ENCODE measurements at regions of chr2 and their contacts with region 1.

Region 1: DNA sequence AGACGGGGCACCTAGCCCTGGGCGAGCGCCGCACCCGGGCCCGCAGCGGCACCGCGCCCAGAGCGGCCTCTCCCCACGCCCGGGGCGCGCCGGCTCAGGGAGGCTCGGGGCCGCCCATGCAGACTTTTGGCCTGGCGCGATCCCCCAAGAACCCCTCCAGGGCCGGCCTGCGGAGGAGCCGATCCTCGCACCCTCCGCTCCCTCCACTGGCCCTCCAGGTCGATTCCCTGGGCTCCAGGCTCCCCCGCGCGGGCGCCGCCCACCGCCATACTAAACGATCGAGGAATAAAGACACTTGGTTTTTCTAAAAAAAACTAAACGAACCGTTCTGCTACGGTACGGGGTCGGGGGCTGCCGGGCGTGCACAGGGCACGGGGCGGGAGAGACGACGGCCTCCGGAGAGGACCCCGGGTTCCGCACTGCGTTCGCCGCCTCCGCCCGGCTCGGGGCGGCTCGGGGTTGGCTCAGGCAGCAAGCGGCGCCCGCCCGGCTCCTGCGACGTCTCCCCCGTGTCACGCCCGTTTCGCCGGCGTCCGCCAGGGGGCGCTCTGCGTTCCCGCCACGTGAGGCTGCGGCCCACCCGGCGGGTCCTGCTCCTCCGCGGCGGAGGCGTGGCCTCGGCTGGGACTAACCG is 365 bp upstream of the KHK start:
- DNase-seq: peak; percentile 94 to 100 (median 98)
- ATAC-seq: peak; percentile 89
- H3K4me3 ChIP-seq: peak overlapping the region; percentile 68 to 80
- H3K4me3 Mint-ChIP-seq: peak overlapping the region; percentile 83
- H3K27ac ChIP-seq: peak overlapping the region; percentile 78 to 82
- H3K27ac Mint-ChIP-seq: peak overlapping the region; percentile 80
- H3K4me1 ChIP-seq: peaks cover 28% of the 10 kb centered on the region
- H3K4me1 Mint-ChIP-seq: peaks cover 21% of the 10 kb centered on the region
- H3K27me3 ChIP-seq: no peaks in the 10 kb centered on the region
- H3K27me3 Mint-ChIP-seq: no peaks in the 10 kb centered on the region
- CTCF ChIP-seq: peak; percentile 81

Region 2: GRCh38 chr2:26785431-26786206 is 300.6 kb before region 1 on chr2 and contains the start of gene CENPA:
- CTCF ChIA-PET with region 1: no interaction called
- POLR2A ChIA-PET with region 1: no interaction called
- intact Hi-C with region 1: loop called in 1 of 2 experiments (anchors 10 kb)
- DNase-seq: peak; percentile 92 to 99 (median 94)
- ATAC-seq: peak; percentile 99
- H3K4me3 ChIP-seq: peak within 1 kb of the TSS; percentile 52 to 63
- H3K4me3 Mint-ChIP-seq: peak within 1 kb of the TSS; percentile 84
- H3K27ac ChIP-seq: peak within 1 kb of the TSS; percentile 58 to 61
- H3K27ac Mint-ChIP-seq: peak within 1 kb of the TSS; percentile 88
- H3K4me1 ChIP-seq: peaks cover 16% of the 10 kb centered on the region
- H3K4me1 Mint-ChIP-seq: peaks cover 12% of the 10 kb centered on the region
- H3K27me3 ChIP-seq: no peaks in the 10 kb centered on the region
- H3K27me3 Mint-ChIP-seq: peaks cover 11% of the 10 kb centered on the region
- CTCF ChIP-seq: no peak
- total RNA-seq, gene CENPA: 0.39 to 0.62 TPM

Region 3: GRCh38 chr2:26816893-26817292 is 269.3 kb before region 1 on chr2:
- CTCF ChIA-PET with region 1: no interaction called
- POLR2A ChIA-PET with region 1: no interaction called
- intact Hi-C with region 1: no loop called
- DNase-seq: no peak
- ATAC-seq: no peak
- H3K4me3 ChIP-seq: no peak overlapping the region
- H3K4me3 Mint-ChIP-seq: no peak overlapping the region
- H3K27ac ChIP-seq: no peak overlapping the region
- H3K27ac Mint-ChIP-seq: no peak overlapping the region
- H3K4me1 ChIP-seq: peaks cover 4% of the 10 kb centered on the region
- H3K4me1 Mint-ChIP-seq: peaks cover 8% of the 10 kb centered on the region
- H3K27me3 ChIP-seq: no peaks in the 10 kb centered on the region
- H3K27me3 Mint-ChIP-seq: peaks cover 13% of the 10 kb centered on the region
- CTCF ChIP-seq: no peak

Region 4: GRCh38 chr2:26922405-26923188 is 163.6 kb before region 1 on chr2:
- CTCF ChIA-PET with region 1: no interaction called
- POLR2A ChIA-PET with region 1: no interaction called
- intact Hi-C with region 1: no loop called
- DNase-seq: peak in 8 of 9 experiments; percentile 13 to 61 (median 38)
- ATAC-seq: peak; percentile 67
- H3K4me3 ChIP-seq: no peak overlapping the region
- H3K4me3 Mint-ChIP-seq: no peak overlapping the region
- H3K27ac ChIP-seq: no peak overlapping the region
- H3K27ac Mint-ChIP-seq: no peak overlapping the region
- H3K4me1 ChIP-seq: no peaks in the 10 kb centered on the region
- H3K4me1 Mint-ChIP-seq: peaks cover 6% of the 10 kb centered on the region
- H3K27me3 ChIP-seq: no peaks in the 10 kb centered on the region
- H3K27me3 Mint-ChIP-seq: peaks cover 28% of the 10 kb centered on the region
- CTCF ChIP-seq: peak; percentile 68

Region 5: DNA sequence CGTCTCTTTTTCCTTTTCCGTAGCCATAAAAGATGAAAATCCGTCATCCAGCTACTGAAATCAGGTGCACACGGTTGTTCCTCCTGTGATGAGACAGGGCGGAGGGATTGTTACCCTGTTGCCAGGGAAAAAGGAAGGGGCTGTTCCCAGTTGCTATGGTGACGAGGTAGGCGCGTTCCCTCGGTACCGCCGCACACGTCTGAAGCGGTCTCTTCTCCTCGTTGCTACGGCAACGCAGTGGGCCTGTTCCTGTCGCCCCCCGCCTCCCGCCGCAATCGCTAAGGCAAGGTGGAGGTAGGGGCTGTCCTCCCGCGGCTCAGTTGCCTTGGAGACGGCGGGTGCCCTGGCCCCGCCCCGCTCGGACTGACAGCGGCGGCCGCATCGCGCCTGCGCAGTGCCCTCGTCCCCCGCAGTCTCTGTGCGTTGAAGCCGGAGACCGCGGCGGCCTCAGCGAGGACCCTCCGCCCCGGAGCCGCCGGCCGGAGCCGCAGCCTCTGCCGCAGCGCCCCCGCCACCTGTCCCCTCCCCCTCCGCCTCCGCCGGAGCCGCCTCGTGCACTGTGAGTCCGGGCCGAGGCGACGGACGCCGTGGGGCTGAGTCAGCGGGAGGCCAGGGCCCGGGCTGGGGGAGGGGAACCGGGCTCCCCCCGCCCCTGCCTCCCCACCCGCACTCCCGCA is 115.8 kb before region 1 on chr2 and contains the start of gene MAPRE3:
- CTCF ChIA-PET with region 1: no interaction called
- POLR2A ChIA-PET with region 1: no interaction called
- intact Hi-C with region 1: loop called in 1 of 2 experiments (anchors 1 kb)
- DNase-seq: peak; percentile 60 to 95 (median 84)
- ATAC-seq: peak; percentile 85
- H3K4me3 ChIP-seq: peak within 1 kb of the TSS; percentile 58 to 65
- H3K4me3 Mint-ChIP-seq: peak within 1 kb of the TSS; percentile 83
- H3K27ac ChIP-seq: peak within 1 kb of the TSS in 1 of 2 experiments; percentile 49
- H3K27ac Mint-ChIP-seq: peak within 1 kb of the TSS; percentile 37
- H3K4me1 ChIP-seq: peaks cover 9% of the 10 kb centered on the region
- H3K4me1 Mint-ChIP-seq: peaks cover 25% of the 10 kb centered on the region
- H3K27me3 ChIP-seq: no peaks in the 10 kb centered on the region
- H3K27me3 Mint-ChIP-seq: peaks cover 19% of the 10 kb centered on the region
- CTCF ChIP-seq: no peak
- total RNA-seq, gene MAPRE3: 2.6 to 3.8 TPM

Region 6: DNA sequence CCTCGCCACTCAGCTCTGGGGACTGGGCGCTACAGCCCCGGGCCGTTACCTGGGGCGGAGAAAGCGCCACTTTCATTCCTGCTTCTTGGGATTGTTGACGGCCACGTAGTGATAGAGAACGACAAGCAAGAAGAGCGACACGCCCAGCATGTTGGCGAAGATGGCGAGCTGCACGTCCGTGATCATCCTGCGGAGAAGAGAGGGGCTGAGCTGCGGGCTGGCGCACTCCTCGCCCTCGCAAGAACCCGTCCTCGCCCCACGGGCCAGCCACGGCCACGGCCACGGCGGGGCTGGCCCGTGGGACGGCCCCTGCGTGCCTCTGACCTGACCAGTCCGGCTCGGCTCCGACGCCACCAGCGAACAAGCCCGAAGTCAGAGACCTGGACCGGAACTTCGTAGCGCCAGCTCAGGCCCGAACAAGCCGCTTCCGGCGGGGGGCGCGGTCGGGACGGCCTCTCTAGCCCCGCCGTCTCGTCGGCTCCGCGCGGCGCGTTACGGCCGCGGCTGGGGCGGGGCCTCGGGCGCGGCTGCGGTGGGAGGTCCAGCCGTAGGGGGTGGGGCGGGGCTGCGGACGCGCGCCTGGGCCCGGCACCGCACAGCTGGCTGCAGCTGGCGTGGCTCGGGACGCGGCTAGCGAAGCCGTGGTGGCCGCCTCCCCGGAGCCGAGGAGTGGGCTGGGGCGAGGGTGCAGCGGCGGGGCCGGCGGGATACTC is 14.8 kb before region 1 on chr2 and contains the start of gene OST4:
- CTCF ChIA-PET with region 1: interaction called, 7 read pairs
- POLR2A ChIA-PET with region 1: interaction called, 35 read pairs
- intact Hi-C with region 1: loop called (anchors 1 kb)
- DNase-seq: peak; percentile 74 to 94 (median 88)
- ATAC-seq: peak; percentile 88
- H3K4me3 ChIP-seq: peak within 1 kb of the TSS; percentile 84 to 93
- H3K4me3 Mint-ChIP-seq: peak within 1 kb of the TSS; percentile 98
- H3K27ac ChIP-seq: peak within 1 kb of the TSS; percentile 92 to 98
- H3K27ac Mint-ChIP-seq: peak within 1 kb of the TSS; percentile 98
- H3K4me1 ChIP-seq: peaks cover 46% of the 10 kb centered on the region
- H3K4me1 Mint-ChIP-seq: peaks cover 76% of the 10 kb centered on the region
- H3K27me3 ChIP-seq: no peaks in the 10 kb centered on the region
- H3K27me3 Mint-ChIP-seq: no peaks in the 10 kb centered on the region
- CTCF ChIP-seq: no peak
- total RNA-seq, gene OST4: 252 to 260 TPM

Region 7: DNA sequence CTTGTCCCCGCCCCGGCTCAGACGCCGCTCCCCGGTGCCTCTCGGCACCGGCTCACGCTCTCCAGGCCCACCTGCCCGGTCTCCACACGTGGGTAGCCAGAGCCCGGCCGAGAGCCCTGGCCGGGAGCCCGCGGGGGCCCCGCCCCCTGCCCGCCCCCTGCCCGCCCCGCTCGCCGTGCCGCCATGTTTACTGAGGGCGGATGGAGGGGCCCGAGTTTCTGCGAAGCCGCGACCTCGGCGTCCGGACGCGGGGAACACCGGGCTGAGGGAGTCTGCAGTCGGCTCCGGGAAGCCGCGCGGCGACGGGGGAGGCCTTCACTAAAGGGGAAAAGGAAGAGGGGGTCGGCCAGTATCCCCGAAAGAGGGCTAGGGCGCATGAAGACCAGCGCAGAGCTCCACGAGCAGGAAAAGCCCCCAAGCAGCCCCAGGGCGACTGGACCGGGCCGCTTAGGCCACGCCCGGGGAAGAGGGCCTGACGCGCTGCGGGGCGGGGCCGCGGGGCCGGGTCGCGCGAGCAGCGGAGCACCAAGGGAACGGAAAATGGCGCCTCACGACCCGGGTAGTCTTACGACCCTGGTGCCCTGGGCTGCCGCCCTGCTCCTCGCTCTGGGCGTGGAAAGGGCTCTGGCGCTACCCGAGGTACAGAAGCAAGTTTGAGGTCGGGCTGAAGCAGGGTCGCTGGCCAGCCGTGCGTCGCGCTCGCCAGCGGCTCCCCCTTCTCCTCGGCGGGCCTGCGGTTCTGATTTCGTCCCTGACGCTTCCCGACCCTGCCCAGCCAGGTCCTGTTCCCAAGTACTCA is 125.8 kb after region 1 on chr2 and contains the starts of genes ATRAID and SLC5A6:
- CTCF ChIA-PET with region 1: no interaction called
- POLR2A ChIA-PET with region 1: no interaction called
- intact Hi-C with region 1: loop called (anchors 1 kb)
- DNase-seq: peak; percentile 78 to 94 (median 87)
- ATAC-seq: peak; percentile 84
- H3K4me3 ChIP-seq: peak within 1 kb of the TSS; percentile 67 to 99
- H3K4me3 Mint-ChIP-seq: peak within 1 kb of the TSS; percentile 100
- H3K27ac ChIP-seq: peak within 1 kb of the TSS; percentile 97 to 100
- H3K27ac Mint-ChIP-seq: peak within 1 kb of the TSS; percentile 100
- H3K4me1 ChIP-seq: peaks cover 26% of the 10 kb centered on the region
- H3K4me1 Mint-ChIP-seq: peaks cover 44% of the 10 kb centered on the region
- H3K27me3 ChIP-seq: no peaks in the 10 kb centered on the region
- H3K27me3 Mint-ChIP-seq: no peaks in the 10 kb centered on the region
- CTCF ChIP-seq: no peak
- total RNA-seq, gene ATRAID: 70.0 to 71.7 TPM
- total RNA-seq, gene SLC5A6: 410 to 431 TPM

Region 8: GRCh38 chr2:27249159-27249890 is 163.1 kb after region 1 on chr2:
- CTCF ChIA-PET with region 1: no interaction called
- POLR2A ChIA-PET with region 1: no interaction called
- intact Hi-C with region 1: no loop called
- DNase-seq: no peak
- ATAC-seq: no peak
- H3K4me3 ChIP-seq: no peak overlapping the region
- H3K4me3 Mint-ChIP-seq: no peak overlapping the region
- H3K27ac ChIP-seq: no peak overlapping the region
- H3K27ac Mint-ChIP-seq: no peak overlapping the region
- H3K4me1 ChIP-seq: peaks cover 4% of the 10 kb centered on the region
- H3K4me1 Mint-ChIP-seq: peaks cover 2% of the 10 kb centered on the region
- H3K27me3 ChIP-seq: no peaks in the 10 kb centered on the region
- H3K27me3 Mint-ChIP-seq: peaks cover 7% of the 10 kb centered on the region
- CTCF ChIP-seq: no peak

Region 9: DNA sequence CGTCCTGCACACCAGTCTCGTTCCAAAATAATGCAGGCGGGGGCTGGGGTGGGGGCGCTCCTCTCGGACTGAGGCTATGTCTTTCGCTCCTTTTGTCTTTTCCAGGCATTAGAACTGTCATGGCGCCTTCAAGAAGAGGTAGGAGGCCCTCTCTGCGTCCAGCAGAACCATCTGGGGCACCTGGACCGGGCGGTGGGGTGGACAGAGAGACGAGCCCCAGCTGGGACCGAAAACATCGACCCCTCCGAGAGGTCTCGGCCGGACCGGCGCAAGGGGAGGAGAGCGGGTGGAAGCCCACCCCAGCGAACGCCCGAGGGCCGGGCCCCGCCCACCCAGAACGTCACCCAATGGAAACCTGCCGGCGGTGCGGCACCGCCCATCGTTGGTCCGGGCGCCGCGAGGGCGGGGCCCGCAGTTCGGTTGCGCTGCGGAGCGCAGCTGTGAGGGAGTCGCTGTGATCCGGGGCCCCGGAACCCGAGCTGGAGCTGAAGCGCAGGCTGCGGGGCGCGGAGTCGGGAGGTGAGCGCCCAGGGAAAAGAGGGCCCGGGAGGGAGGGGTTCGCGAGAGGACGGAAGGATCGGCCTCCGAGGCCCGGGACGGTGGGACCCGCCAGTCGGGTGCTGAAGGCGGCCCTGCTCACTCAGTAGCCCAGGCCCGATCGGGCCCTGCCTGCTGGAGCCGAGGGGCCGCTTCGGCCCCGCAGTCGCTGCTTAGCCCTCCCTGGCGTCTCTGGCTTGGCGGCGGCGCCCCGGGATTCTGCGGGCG is 342.2 kb after region 1 on chr2 and contains the start of gene NRBP1:
- CTCF ChIA-PET with region 1: no interaction called
- POLR2A ChIA-PET with region 1: no interaction called
- intact Hi-C with region 1: loop called in 1 of 2 experiments (anchors 10 kb)
- DNase-seq: peak; percentile 80 to 95 (median 91)
- ATAC-seq: peak; percentile 91
- H3K4me3 ChIP-seq: peak within 1 kb of the TSS; percentile 81 to 92
- H3K4me3 Mint-ChIP-seq: peak within 1 kb of the TSS; percentile 97
- H3K27ac ChIP-seq: peak within 1 kb of the TSS; percentile 79 to 90
- H3K27ac Mint-ChIP-seq: peak within 1 kb of the TSS; percentile 97
- H3K4me1 ChIP-seq: peaks cover 29% of the 10 kb centered on the region
- H3K4me1 Mint-ChIP-seq: peaks cover 38% of the 10 kb centered on the region
- H3K27me3 ChIP-seq: no peaks in the 10 kb centered on the region
- H3K27me3 Mint-ChIP-seq: no peaks in the 10 kb centered on the region
- CTCF ChIP-seq: no peak
- total RNA-seq, gene NRBP1: 192 to 196 TPM

Region 10: GRCh38 chr2:27653397-27653796 is 567.2 kb after region 1 on chr2:
- CTCF ChIA-PET with region 1: no interaction called
- POLR2A ChIA-PET with region 1: no interaction called
- intact Hi-C with region 1: no loop called
- DNase-seq: no peak
- ATAC-seq: no peak
- H3K4me3 ChIP-seq: no peak overlapping the region
- H3K4me3 Mint-ChIP-seq: no peak overlapping the region
- H3K27ac ChIP-seq: no peak overlapping the region
- H3K27ac Mint-ChIP-seq: no peak overlapping the region
- H3K4me1 ChIP-seq: no peaks in the 10 kb centered on the region
- H3K4me1 Mint-ChIP-seq: peaks cover 2% of the 10 kb centered on the region
- H3K27me3 ChIP-seq: no peaks in the 10 kb centered on the region
- H3K27me3 Mint-ChIP-seq: no peaks in the 10 kb centered on the region
- CTCF ChIP-seq: no peak